IMR-90 (cell line): ENCODE measurements at regions of chr10 and their contacts with region 1.

Region 1: DNA sequence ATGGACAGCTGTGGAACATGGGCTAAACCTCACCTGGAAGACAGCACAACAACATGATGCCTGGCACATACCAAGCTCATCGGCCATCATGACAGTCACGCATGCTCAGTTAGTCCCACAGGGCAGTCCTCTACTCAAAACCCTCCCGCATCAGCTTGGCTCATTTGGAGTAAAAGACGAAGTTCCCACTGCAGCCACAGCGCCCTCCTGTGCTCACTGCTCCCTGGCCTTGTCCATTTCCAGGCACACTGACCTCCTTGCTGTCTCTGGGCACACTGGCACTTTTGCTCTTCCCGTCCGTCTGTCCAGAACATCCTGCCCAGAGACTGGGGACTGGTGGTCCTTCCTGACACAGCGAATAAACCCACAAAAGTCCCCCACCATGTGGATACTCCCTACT is 66.2 kb downstream of the LARP4B start:
- DNase-seq: no peak
- ATAC-seq: no peak
- H3K4me3 ChIP-seq: no peak overlapping the region
- H3K27ac ChIP-seq: no peak overlapping the region
- H3K4me1 ChIP-seq: peaks cover 2% of the 10 kb centered on the region; the same call in 1 of the 2 replicates
- H3K27me3 ChIP-seq: no peaks in the 10 kb centered on the region
- CTCF ChIP-seq: no peak
- POLR2A ChIP-seq: no peak
- RAD21 ChIP-seq: no peak

Region 2: GRCh38 chr10:718152-718700 is 147.0 kb before region 1 on chr10:
- CTCF ChIA-PET with region 1: no interaction called
- POLR2A ChIA-PET with region 1: no interaction called
- dilution Hi-C with region 1: no loop called
- in situ Hi-C with region 1: no loop called
- intact Hi-C with region 1: no loop called
- DNase-seq: no peak
- ATAC-seq: no peak
- H3K4me3 ChIP-seq: no peak overlapping the region
- H3K27ac ChIP-seq: no peak overlapping the region
- H3K4me1 ChIP-seq: no peaks in the 10 kb centered on the region
- H3K27me3 ChIP-seq: peaks cover 12% of the 10 kb centered on the region
- CTCF ChIP-seq: no peak
- POLR2A ChIP-seq: no peak
- RAD21 ChIP-seq: no peak

Region 3: GRCh38 chr10:878895-879294 is 13.6 kb after region 1 on chr10:
- CTCF ChIA-PET with region 1: no interaction called
- POLR2A ChIA-PET with region 1: interaction called, 17 read pairs
- dilution Hi-C with region 1: no loop called
- in situ Hi-C with region 1: no loop called
- intact Hi-C with region 1: no loop called
- DNase-seq: no peak
- ATAC-seq: no peak; the same call in 1 of the 2 replicates
- H3K4me3 ChIP-seq: no peak overlapping the region
- H3K27ac ChIP-seq: no peak overlapping the region
- H3K4me1 ChIP-seq: peaks cover 7% of the 10 kb centered on the region
- H3K27me3 ChIP-seq: no peaks in the 10 kb centered on the region
- CTCF ChIP-seq: no peak
- POLR2A ChIP-seq: no peak
- RAD21 ChIP-seq: no peak

Region 4: DNA sequence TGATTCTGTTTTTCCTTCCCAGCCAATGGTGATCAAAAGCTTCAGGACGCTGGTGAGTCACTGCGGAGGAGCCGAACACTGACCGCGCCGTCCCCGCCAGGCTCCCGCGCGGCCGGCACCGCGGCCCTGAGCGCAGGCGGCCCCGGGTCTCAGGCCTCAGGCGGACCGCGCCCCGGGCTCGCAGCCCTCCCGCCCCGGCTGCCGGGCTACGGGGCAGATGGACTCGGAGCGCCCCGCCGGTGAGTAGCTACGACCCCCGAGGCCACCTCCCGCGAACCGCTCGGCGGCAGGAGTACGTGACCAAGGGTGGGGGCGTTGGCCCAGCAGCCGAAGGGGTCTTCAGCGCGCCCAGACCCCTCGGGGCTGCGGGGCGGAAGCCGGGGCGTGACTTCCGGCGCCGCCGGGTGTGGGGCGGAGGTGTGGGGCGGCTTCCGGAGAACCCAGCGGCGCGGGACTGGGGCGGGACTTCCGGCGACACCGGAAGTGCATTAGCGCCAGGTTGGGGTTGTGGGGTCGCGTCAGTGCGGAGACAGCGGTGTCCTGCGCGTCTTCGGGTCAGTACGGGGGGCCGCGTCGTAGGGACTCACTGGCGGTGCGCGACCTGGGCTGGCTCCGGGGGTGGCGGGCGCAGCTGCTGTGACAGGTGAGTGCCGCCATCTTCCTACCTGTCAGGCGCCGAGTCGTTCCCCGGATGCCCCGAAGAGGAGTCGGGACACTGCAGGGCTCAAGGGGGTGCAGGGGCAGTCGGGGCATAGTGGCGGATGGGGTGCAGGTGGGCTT is 191.3 kb after region 1 on chr10 and contains the start of gene WDR37:
- CTCF ChIA-PET with region 1: no interaction called
- POLR2A ChIA-PET with region 1: interaction called, 11 read pairs
- dilution Hi-C with region 1: no loop called
- in situ Hi-C with region 1: no loop called
- intact Hi-C with region 1: no loop called
- DNase-seq: peak; percentile 90
- ATAC-seq: peak; percentile 88
- H3K4me3 ChIP-seq: peak within 1 kb of the TSS; percentile 93
- H3K27ac ChIP-seq: peak within 1 kb of the TSS; percentile 98
- H3K4me1 ChIP-seq: peaks cover 2% of the 10 kb centered on the region
- H3K27me3 ChIP-seq: no peaks in the 10 kb centered on the region
- CTCF ChIP-seq: no peak
- POLR2A ChIP-seq: peak; percentile 95
- RAD21 ChIP-seq: no peak
- total RNA-seq, gene WDR37: 12.7 and 16.4 TPM in 2 replicates